ENCODE measurements at regions of chr19 and their contacts with region 1.

Region 1: GRCh38 chr19:46821498-46822409 is 28.9 kb downstream of the AP2S1 start:
- DNase-seq: no peak
- ATAC-seq: peak; percentile 39 to 59

Region 2: GRCh38 chr19:46759817-46760333 is 61.9 kb before region 1 on chr19:
- intact Hi-C with region 1: loop called in 1 of 2 experiments (anchors 5 kb)
- DNase-seq: no peak
- ATAC-seq: peak in 1 of 2 donors; percentile 32